Left colon (tissue), 2 donors: ENCODE measurements at regions of chr6 and their contacts with region 1.

Region 1: GRCh38 chr6:64330694-64331307 is 695.2 kb downstream of the PHF3 start:
- DNase-seq: peak; percentile 55 to 91
- ATAC-seq: peak; percentile 59

Region 2: DNA sequence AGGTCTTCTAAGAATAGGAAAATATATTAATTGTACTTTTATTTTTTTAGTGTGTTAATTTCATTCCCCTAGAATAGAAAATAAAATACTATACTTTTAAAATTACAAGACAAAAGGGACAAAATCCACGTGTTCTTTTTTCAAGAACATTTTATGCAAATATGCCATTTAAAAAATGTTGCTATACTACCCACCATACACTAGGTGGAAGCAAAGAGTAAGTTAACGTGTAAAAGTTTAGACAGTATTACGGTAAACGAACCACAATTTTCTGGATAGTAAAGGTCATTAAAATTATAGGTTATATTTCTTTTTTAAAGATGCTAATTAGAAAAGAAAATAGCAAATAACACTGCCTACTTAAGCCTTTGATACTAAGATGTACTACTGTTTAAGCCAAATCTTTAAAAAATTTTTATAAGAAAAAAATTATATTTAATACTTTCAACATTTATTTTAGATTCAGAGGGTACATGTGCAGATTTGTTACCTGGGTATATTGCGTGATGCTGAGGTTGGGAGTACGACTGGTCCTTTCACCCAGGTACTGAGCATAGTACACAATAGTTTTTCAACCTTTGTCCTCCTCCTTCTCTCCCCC is 407.6 kb before region 1 on chr6:
- intact Hi-C with region 1: loop called in 1 of 2 experiments (anchors 5 kb)
- DNase-seq: no peak
- ATAC-seq: peak; percentile 35

Region 3: DNA sequence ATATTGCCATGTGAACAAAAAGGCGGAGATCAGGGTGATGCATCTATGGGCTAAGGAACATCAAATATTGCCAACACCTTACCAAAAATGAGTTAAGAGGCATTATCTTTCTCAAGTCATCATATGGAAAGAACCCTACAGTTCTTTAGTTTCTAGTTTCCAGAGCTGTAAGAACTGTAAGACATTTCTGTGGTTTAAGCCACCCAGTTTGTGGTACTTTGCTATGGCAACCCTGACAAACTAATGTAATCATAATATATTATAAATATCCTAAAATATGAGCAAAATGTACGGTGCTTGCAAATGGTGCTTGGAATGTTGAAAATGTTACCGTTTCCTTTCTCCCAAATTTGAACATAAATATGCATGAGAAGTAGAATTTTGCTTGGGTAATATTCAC is 345.6 kb before region 1 on chr6:
- intact Hi-C with region 1: no loop called
- DNase-seq: no peak
- ATAC-seq: no peak

Region 4: DNA sequence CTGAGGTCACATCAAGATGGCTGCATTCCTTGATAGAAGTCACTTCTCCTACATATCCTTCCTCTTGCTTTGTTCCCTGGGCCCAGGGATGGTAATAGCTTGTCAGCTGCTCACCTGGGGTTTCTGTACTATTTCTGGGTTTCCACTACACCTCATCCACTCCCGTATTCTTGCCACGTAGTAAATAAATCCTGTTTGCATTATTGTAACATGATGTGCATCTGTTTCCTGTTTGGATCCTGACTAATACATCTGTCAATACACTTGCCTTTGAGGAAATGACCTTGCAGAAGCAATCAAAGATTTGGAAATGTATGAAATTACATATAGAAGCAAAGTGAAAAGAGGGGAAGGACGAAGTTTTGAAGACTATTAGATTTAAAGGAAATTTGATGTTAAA is 76.2 kb before region 1 on chr6:
- intact Hi-C with region 1: no loop called
- DNase-seq: no peak
- ATAC-seq: no peak